Natural killer cell (primary cell): ENCODE measurements at regions of chr18 and their contacts with region 1.

Region 1: DNA sequence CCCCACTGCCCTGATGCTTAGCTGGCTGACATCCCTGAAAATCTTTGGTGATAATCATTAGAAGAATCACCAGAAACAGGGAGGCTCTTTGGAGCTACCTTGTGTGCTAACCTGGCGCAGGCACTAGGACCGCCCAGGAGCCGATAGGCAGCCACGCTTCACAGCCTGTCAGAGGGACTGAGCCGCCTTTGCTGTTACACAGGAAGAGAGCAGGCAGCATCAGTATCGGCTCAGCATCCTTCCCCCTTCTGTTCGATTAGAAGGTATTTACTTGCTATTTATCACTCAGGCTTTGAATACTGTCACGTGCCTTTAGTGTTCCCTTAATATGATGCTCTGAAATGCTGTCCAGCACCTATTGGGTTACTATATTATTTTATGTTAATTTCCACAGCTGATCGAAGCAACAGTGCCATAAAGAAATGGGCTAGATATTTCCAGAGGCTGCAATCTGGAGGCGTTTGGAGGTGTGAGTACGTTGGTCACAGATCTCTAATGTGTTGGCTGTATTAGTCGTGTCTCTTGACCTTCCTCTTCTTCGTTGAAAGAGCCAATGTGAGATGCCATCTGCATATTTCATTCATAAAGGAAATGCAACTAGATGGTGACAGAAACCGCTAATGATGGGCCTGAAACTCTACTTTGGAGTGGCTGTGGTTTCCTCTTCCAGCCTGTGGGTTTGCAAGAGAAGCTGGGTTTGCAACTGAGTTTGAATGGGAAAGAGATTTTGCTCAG is 110.4 kb upstream of the RAB27B start:
- DNase-seq: peak; percentile 37 to 64
- ATAC-seq: peak; percentile 89 to 95 (median 95)
- H3K4me3 ChIP-seq: peak overlapping the region; percentile 28
- H3K4me3 Mint-ChIP-seq: peak overlapping the region; percentile 92
- H3K27ac ChIP-seq: no peak overlapping the region
- H3K27ac Mint-ChIP-seq: peak overlapping the region; percentile 81 to 84
- H3K4me1 ChIP-seq: peaks cover 25% of the 10 kb centered on the region
- H3K4me1 Mint-ChIP-seq: peaks cover 46 to 53% of the 10 kb centered on the region in 2 donors
- H3K27me3 ChIP-seq: no peaks in the 10 kb centered on the region
- H3K27me3 Mint-ChIP-seq: peaks cover 6 to 8% of the 10 kb centered on the region in 2 donors
- CTCF ChIP-seq: no peak

Region 2: DNA sequence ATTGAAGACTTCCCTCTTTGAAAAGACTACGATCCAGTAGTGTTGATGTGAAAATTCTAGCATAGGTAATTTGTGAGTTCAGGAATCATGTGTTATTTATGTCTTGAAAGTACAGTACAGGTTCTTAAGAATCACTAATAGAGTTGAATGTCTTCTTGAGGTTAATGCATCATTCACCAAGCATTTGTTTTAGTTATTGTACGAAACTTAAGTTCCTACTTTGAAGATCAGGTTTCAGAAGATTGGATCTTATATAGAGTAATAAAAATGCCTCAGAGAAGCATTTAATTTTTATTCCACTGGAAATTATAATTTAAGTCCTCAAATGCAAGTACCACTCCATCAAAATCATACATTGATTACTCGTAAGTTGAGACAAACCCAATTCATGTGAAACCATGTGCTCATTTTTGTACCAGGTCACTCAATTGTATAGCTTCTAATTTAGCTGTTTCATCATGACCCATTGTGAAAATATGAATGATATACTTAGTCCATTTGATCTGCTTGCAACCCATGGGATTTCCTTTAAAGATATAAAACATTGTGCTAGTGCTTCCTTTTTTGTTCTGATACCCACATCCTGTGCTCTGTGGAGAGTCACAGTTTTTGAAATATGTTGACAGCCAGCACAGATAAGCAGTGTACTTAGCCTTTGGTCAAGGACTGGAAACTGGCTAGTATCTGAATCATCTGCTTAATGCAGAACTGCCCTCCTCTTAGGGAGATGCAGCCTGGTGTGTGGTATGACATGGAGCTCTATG is 87.9 kb after region 1 on chr18:
- intact Hi-C with region 1: loop called (anchors 10 kb)
- DNase-seq: peak in 1 of 2 donors; percentile 17
- ATAC-seq: peak; percentile 91 to 94 (median 93)
- H3K4me3 ChIP-seq: no peak overlapping the region
- H3K4me3 Mint-ChIP-seq: peak overlapping the region; percentile 69
- H3K27ac ChIP-seq: peak overlapping the region; percentile 40
- H3K27ac Mint-ChIP-seq: peak overlapping the region; percentile 67 to 87
- H3K4me1 ChIP-seq: peaks cover 4% of the 10 kb centered on the region
- H3K4me1 Mint-ChIP-seq: peaks cover 23 to 36% of the 10 kb centered on the region in 2 donors
- H3K27me3 ChIP-seq: no peaks in the 10 kb centered on the region
- H3K27me3 Mint-ChIP-seq: no peaks in the 10 kb centered on the region
- CTCF ChIP-seq: no peak

Region 3: GRCh38 chr18:54828281-54828881 is 110.5 kb after region 1 on chr18 and contains the start of gene RAB27B:
- intact Hi-C with region 1: loop called (anchors 5 kb)
- DNase-seq: peak; percentile 78
- ATAC-seq: peak; percentile 94 to 98 (median 96)
- H3K4me3 ChIP-seq: peak within 1 kb of the TSS; percentile 62
- H3K4me3 Mint-ChIP-seq: peak within 1 kb of the TSS; percentile 98
- H3K27ac ChIP-seq: peak within 1 kb of the TSS; percentile 71
- H3K27ac Mint-ChIP-seq: peak within 1 kb of the TSS; percentile 91 to 94
- H3K4me1 ChIP-seq: peaks cover 4% of the 10 kb centered on the region
- H3K4me1 Mint-ChIP-seq: peaks cover 48 to 57% of the 10 kb centered on the region in 2 donors
- H3K27me3 ChIP-seq: no peaks in the 10 kb centered on the region
- H3K27me3 Mint-ChIP-seq: peaks cover 0 to 8% of the 10 kb centered on the region in 2 donors
- CTCF ChIP-seq: no peak
- total RNA-seq, gene RAB27B: 23.0 to 25.7 (median 24.0) TPM